ENCODE measurements at regions of chr10 and their contacts with region 1.

Region 1: DNA sequence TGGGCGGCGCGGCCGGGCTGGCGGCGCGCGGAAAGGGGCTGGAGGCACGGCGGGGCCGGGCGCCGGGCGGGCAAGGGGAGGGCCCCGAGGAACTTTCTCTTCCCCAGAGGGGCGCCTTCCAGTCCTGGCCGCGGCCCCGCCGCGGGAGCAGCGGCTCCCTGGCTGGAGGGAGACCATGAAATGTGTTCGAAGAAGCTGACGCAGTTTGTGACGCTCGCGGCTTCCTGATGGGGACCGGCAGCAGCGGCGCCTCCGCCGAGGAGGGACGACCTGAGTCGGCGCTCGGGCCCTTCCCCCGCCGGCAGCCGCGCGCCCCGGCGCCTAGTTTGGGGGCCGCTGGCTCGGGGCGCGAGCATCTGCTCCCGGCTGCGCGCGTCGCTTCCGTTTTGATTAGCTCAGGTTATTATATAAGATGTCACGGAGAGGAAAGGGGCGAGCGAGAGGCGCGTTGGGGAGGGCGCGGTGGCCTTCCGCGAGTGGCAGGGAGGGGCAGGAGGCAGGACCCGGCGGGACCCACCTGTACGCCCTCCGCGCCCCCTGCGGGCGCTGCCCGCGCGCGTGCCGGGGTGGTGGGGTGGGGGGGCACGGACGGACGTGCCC is 57.1 kb upstream of the PCGF5 start:
- DNase-seq: peak; percentile 44 to 50 (median 48)
- H3K4me3 ChIP-seq: peak overlapping the region; percentile 52 to 80 (median 68)
- H3K4me3 Mint-ChIP-seq: peak overlapping the region; percentile 87 to 89
- H3K27ac ChIP-seq: peak overlapping the region in 1 of 2 donors; percentile 76
- H3K27ac Mint-ChIP-seq: peak overlapping the region in 6 of 7 donors; percentile 79 to 92 (median 90)
- H3K4me1 ChIP-seq: peaks cover 8 to 14% of the 10 kb centered on the region in 2 donors
- H3K4me1 Mint-ChIP-seq: peaks cover 18% of the 10 kb centered on the region
- H3K27me3 ChIP-seq: peaks cover 21 to 41% of the 10 kb centered on the region in 2 donors
- H3K27me3 Mint-ChIP-seq: peaks cover 31 to 43% (median 37%) of the 10 kb centered on the region in 3 donors
- CTCF ChIP-seq: no peak

Region 2: GRCh38 chr10:91077549-91078071 is 85.8 kb before region 1 on chr10:
- intact Hi-C with region 1: no loop called
- DNase-seq: no peak
- H3K4me3 ChIP-seq: no peak overlapping the region
- H3K4me3 Mint-ChIP-seq: no peak overlapping the region
- H3K27ac ChIP-seq: no peak overlapping the region
- H3K27ac Mint-ChIP-seq: no peak overlapping the region
- H3K4me1 ChIP-seq: no peaks in the 10 kb centered on the region
- H3K4me1 Mint-ChIP-seq: no peaks in the 10 kb centered on the region
- H3K27me3 ChIP-seq: no peaks in the 10 kb centered on the region
- H3K27me3 Mint-ChIP-seq: peaks cover 10 to 12% (median 11%) of the 10 kb centered on the region in 3 donors
- CTCF ChIP-seq: no peak

Region 3: DNA sequence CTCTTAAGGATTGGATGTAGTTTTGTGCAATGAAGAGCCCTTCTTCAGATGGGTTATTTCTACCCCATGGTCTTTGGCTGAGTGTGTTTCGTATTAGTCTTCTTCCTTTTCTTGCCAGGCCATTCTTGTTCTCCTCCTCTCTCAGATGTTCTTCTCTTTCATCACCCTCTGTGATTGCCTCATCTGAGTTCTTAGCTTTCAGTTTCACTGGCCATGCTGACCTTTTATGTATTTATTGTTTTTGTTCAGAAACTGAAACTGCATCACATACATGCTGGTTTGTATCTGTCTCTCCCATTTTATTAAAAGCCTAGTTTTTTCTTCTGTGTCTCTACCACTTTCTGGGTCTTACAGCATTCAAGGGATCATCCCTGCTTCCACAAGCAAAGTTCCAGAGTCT is 35.4 kb after region 1 on chr10:
- intact Hi-C with region 1: loop called (anchors 5 kb)
- DNase-seq: peak; percentile 81 to 88 (median 84)
- H3K4me3 ChIP-seq: peak overlapping the region in 2 of 3 experiments; percentile 22 to 53
- H3K4me3 Mint-ChIP-seq: peak overlapping the region; percentile 0 to 52
- H3K27ac ChIP-seq: peak overlapping the region; percentile 57 to 78
- H3K27ac Mint-ChIP-seq: peak overlapping the region; percentile 84 to 92 (median 89)
- H3K4me1 ChIP-seq: peaks cover 20 to 23% of the 10 kb centered on the region in 2 donors
- H3K4me1 Mint-ChIP-seq: peaks cover 37% of the 10 kb centered on the region
- H3K27me3 ChIP-seq: no peaks in the 10 kb centered on the region
- H3K27me3 Mint-ChIP-seq: peaks cover 0 to 2% (median 0%) of the 10 kb centered on the region in 3 donors
- CTCF ChIP-seq: no peak

Measured in CD14-positive monocyte (primary cell).